Gastrocnemius medialis (tissue), 4 donors: ENCODE measurements at regions of chr13 and their contacts with region 1.

Region 1: DNA sequence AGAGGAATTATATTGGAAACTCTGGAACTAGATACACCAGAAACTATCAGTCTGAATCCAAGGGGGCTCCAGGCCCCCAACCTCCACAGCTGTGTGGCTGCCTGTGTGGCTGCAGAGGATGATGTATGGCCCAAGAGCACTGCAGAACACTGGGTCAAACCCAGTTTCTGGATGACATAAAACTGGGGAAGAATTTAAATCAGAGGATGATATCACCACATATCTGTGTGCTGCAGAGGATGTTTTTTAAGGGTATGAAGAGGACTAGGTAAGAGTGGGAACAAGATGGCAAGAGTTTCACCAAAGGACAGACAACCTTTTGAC is 226.4 kb downstream of the SUCLA2 start:
- DNase-seq: no peak
- ATAC-seq: no peak
- H3K4me3 ChIP-seq: no peak overlapping the region
- H3K27ac ChIP-seq: no peak overlapping the region
- H3K4me1 ChIP-seq: no peaks in the 10 kb centered on the region
- H3K27me3 ChIP-seq: no peaks in the 10 kb centered on the region
- CTCF ChIP-seq: no peak
- POLR2A ChIP-seq: no peak

Region 2: GRCh38 chr13:46831588-46832194 is 942.9 kb before region 1 on chr13:
- in situ Hi-C with region 1: loop called in 3 of 4 experiments (anchors 5 to 25 kb)
- intact Hi-C with region 1: loop called (anchors 2 kb)
- DNase-seq: no peak
- ATAC-seq: no peak
- H3K4me3 ChIP-seq: no peak overlapping the region
- H3K27ac ChIP-seq: no peak overlapping the region
- H3K4me1 ChIP-seq: no peaks in the 10 kb centered on the region
- H3K27me3 ChIP-seq: no peaks in the 10 kb centered on the region
- CTCF ChIP-seq: peak; percentile 28 to 65 (median 53)
- POLR2A ChIP-seq: no peak

Region 3: GRCh38 chr13:46975173-46975572 is 799.5 kb before region 1 on chr13:
- in situ Hi-C with region 1: no loop called
- intact Hi-C with region 1: loop called (anchors 1 kb)
- DNase-seq: no peak
- ATAC-seq: no peak
- H3K4me3 ChIP-seq: no peak overlapping the region
- H3K27ac ChIP-seq: no peak overlapping the region
- H3K4me1 ChIP-seq: no peaks in the 10 kb centered on the region
- H3K27me3 ChIP-seq: no peaks in the 10 kb centered on the region
- CTCF ChIP-seq: no peak
- POLR2A ChIP-seq: no peak

Region 4: DNA sequence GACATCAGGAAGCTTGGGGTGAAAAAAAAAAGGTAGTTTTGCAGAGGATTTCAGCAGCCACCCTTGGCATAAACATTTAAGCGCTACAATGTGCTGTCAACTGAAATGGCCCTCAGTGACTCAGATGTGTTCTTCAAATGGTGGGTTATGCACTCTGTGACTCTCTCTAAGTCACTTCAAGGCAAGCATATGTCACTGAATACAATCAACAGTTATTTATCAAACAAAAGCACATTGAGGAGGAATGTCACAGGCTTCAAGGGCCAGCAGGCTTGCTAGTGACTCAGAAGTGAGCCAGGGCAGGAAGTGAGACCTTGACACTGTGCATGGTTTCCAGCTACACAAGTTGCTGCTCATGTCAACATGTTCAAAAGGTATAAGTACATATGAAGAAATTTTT is 354.1 kb before region 1 on chr13:
- in situ Hi-C with region 1: no loop called
- intact Hi-C with region 1: loop called (anchors 2 kb)
- DNase-seq: no peak
- ATAC-seq: no peak
- H3K4me3 ChIP-seq: no peak overlapping the region
- H3K27ac ChIP-seq: no peak overlapping the region
- H3K4me1 ChIP-seq: no peaks in the 10 kb centered on the region
- H3K27me3 ChIP-seq: no peaks in the 10 kb centered on the region
- CTCF ChIP-seq: no peak
- POLR2A ChIP-seq: no peak

Region 5: GRCh38 chr13:47598340-47598911 is 176.2 kb before region 1 on chr13:
- in situ Hi-C with region 1: no loop called
- intact Hi-C with region 1: loop called (anchors 10 kb)
- DNase-seq: no peak
- ATAC-seq: no peak
- H3K4me3 ChIP-seq: no peak overlapping the region
- H3K27ac ChIP-seq: no peak overlapping the region
- H3K4me1 ChIP-seq: no peaks in the 10 kb centered on the region
- H3K27me3 ChIP-seq: no peaks in the 10 kb centered on the region
- CTCF ChIP-seq: no peak
- POLR2A ChIP-seq: no peak

Region 6: DNA sequence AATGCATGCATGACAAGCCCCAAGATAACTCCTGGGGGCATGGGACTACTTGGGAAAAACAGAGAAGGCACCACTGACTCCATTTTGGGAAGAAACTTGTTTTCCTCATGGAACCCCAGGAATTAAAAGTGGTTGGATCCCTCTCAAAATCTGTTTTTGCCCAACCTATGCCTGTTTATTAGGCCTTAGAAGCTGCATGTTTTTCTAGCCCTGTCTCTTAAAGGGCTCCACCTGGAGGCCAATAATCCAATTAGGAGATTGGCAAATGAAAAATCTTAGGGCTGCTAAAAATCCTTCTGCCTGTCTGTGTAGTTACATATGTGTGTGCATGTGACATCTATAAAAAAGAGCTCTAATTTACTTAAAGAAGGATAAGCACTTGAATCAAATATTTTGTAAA is 293.4 kb after region 1 on chr13:
- in situ Hi-C with region 1: no loop called
- intact Hi-C with region 1: no loop called
- DNase-seq: no peak
- ATAC-seq: no peak
- H3K4me3 ChIP-seq: no peak overlapping the region
- H3K27ac ChIP-seq: no peak overlapping the region
- H3K4me1 ChIP-seq: no peaks in the 10 kb centered on the region
- H3K27me3 ChIP-seq: no peaks in the 10 kb centered on the region
- CTCF ChIP-seq: no peak
- POLR2A ChIP-seq: no peak

Region 7: DNA sequence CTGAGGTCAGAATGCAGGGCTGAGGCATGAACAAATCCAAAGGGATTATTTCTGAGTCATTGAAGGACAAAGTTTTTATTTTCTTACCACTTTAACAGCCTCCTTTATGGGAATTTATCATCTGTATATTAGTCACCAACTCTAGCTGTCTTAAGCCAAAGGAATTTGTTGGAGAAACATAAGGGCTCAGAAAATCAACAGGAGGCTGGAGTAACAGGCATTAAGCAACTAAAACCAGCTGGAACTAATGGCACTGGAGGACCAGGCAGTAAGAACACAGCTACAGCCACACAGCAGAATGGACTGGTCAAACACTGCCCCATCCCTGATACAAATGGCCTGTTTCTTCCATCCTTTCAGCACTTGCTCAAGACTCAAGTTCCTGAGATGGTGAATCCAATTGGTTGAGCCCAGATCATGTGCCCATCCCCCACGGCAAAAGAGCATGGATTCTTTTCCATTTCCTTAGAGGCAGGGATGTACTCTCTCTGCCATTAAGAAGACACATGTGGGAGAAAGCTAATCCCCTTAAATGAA is 1043.9 kb after region 1 on chr13:
- in situ Hi-C with region 1: no loop called
- intact Hi-C with region 1: no loop called
- DNase-seq: no peak
- ATAC-seq: no peak
- H3K4me3 ChIP-seq: no peak overlapping the region
- H3K27ac ChIP-seq: no peak overlapping the region
- H3K4me1 ChIP-seq: no peaks in the 10 kb centered on the region
- H3K27me3 ChIP-seq: no peaks in the 10 kb centered on the region
- CTCF ChIP-seq: no peak
- POLR2A ChIP-seq: no peak